HEK293T (cell line): ENCODE measurements at regions of chr17 and their contacts with region 1.

Region 1: DNA sequence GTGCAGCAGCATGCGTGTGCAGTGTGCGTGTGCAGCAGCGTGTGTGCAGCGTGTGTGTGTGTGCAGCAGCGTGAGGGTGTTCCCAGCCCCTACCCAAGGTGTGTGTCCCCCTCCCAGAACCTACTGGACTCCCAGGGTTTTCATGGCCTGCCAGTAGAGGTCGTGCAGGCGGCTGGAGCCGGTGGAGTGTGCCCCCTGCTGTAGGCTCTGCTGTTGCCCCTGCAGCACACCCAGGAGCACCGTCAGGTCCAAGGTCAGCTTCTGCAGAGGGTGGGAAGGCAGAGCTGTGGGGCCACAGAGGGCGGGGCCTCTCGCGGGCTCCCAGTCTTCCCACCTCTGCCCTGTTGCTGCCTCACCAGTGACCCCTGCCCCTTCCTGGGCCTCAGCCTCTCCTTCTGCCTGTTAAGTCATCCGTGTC is 15.0 kb downstream of the MYBBP1A start:
- DNase-seq: no peak

Region 2: DNA sequence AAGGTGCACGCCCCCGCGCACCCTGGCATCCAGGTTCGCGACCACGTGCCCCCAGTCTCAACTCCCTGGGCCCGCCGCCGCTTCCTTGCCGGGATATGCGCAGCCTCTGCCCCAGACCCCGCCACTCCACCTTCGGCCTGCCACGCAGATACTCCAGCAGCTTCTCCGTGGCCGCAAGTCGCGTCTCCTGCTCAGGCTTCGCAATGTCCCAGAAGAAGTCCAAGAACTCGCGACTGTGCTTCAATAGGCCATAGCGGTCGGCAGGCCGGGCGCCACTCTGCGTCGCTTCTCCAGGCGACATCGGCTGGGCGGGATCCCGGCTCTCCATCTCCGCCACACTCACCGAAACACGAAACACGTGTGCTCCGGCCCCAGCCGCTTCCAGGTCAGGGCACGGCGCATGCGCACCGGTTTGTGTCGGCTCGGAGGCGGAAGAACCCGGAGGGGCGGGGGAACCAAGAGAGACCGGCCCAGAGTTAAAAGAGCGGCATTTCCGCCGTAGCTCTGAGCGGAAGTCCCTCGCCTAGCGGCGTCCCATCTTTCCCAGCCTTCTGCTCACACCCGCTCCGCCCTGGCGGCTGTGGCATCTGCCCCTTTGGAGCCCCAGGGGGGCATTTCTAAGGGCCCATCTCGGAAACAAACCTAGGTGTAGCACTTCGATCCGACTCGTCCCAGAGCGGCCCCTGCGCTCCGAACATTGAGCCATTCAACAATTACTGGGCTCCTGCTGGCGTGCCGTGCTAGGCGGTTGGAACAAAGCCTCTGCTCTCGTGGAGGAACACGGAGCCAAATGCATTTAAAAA is 15.0 kb after region 1 on chr17 and contains the start of gene MYBBP1A:
- CTCF ChIA-PET with region 1: no interaction called
- POLR2A ChIA-PET with region 1: interaction called, 22 read pairs
- DNase-seq: peak; percentile 99